ENCODE measurements at regions of chr11 and their contacts with region 1.

Region 1: DNA sequence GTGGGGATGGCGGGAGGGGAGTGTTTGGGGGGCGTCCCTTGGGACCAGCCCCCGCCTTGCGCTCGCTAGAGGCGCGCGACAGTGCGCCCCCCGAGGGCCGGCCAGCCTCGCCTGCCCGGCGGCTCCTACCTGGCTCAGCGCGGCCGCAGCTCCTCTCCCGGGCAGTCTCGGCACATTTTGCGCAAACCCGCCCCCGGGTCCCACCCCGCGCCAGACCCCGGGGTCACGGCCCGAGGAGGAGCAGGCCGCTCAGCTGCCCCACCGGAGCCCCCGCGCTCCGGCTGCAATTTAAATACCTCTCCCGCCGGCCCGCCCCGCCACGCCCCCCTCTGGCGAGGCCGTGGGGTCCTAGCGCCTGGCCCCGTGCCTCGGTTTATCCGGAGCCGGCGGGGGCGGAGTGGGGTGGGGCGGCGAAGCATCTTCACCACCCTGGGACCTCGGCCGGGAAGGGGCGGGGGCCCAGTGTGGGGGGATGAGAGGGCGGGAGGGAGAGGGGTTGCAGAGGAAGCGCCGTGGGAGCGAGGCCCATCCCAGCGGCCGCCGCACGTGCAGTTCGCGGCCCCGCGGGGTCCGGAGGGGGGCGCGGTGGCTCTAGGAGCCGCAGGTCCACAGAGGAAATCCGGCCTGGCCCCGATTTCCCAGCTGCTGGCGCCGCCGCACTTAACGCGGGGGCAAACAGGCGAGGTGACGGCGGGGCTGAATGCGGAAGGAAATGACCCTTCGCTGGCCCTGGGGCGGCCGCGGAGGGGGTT is at the start of gene LRRC32:
- DNase-seq: peak; percentile 86
- total RNA-seq, gene LRRC32: 33.5 TPM

Region 2: DNA sequence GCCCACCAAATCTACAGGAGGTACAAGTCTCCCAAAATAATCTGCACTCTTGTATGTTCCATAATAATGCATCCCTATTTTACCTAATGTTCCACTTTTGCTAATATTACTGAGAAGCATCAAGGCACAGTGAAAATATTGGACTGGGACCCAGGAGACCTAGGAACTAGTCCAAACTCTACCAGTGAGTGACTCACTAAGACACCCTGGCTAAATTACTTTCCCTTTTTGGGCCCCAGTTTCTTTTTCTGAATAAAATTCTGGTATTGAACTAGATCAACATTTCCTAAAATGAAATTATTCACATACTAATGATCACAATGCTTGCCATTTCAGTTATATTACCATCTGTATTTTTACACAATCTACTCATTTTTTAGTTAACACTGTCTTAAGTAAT is 309.3 kb before region 1 on chr11:
- intact Hi-C with region 1: no loop called
- DNase-seq: no peak

Region 3: DNA sequence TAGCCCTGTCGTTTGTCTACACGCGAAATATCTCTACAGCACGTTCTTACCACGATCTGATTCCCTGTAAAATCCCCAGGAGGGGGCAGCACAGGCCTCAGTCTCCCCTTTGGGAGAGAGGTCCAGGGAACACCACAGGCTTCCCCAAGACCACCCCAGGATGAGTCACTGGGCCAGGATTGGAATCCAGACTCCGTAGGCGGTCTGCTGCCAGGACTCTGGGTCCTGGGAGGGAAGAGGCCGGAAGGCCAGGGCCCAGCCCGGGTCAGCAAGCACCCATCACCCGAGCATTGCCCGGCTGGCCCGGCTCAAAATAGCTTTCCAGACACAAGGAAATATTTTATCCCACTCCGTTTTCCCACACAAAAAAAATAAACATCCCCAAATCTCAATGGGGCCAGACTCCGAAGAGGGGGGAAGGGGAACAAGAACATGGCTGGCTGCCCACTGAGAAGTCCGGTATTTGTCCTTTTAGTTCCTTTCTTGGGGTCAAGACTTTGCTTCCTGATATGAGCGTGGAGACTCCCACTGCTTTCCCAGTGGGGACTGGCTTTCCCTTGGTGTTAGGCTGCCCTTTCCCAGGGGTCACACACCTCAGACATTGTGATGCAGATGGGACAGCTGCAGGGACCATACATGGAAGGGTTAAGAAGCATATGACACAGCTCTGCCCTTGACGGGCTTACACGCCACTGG is 91.5 kb before region 1 on chr11:
- intact Hi-C with region 1: loop called (anchors 2 kb)
- DNase-seq: peak; percentile 85

Region 4: DNA sequence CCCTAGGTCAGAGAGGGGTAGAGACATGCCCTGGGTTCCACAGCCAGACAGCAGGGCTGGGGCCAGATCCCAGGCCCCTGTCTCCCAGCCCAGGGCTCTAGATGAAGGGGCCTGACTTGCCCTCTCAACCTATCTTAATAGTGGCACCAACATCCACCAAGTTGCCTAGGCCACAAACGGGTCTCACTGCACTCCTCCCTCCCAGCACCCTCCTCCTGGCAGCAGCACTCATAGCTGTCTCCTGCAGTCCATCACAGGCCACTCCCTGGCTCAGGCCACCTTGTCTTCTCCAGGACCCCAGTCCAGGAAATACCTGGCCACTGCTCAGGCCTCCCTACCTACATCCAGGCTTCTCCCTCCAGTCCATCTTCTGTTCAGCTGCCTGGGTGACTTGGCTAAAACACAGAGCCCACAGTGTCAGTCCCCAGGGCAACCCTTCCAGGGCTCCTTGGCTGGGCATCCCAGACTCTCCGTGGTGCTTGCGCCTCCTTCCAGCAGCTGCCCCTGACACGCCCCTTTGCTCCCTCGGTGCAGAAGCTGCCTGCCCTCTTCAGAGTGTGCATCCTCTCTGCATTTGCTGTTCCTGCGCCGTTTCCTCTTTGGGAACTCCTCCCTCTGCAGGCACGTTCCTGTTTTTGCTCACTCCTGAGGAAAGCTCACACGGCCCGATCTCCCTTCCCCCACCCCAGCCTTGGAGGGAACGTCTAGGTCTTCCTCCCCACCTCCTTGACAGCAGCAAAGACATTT is 40.6 kb before region 1 on chr11:
- intact Hi-C with region 1: loop called (anchors 2 kb)
- DNase-seq: peak; percentile 89

Region 5: GRCh38 chr11:76946245-76946644 is 275.6 kb after region 1 on chr11:
- intact Hi-C with region 1: no loop called
- DNase-seq: no peak

Measured in cardiac septum (tissue), 1 donor.